GM12878 (cell line): ENCODE measurements at regions of chr1 and their contacts with region 1.

Region 1: GRCh38 chr1:87346122-87346814 is 17.6 kb downstream of the LMO4 start:
- DNase-seq: no peak
- ATAC-seq: no peak
- H3K4me3 ChIP-seq: no peak overlapping the region
- H3K27ac ChIP-seq: no peak overlapping the region
- H3K4me1 ChIP-seq: peaks cover 6% of the 10 kb centered on the region
- H3K27me3 ChIP-seq: no peaks in the 10 kb centered on the region
- CTCF ChIP-seq: no peak
- EP300 ChIP-seq: no peak
- POLR2A ChIP-seq: no peak
- RAD21 ChIP-seq: no peak

Region 2: DNA sequence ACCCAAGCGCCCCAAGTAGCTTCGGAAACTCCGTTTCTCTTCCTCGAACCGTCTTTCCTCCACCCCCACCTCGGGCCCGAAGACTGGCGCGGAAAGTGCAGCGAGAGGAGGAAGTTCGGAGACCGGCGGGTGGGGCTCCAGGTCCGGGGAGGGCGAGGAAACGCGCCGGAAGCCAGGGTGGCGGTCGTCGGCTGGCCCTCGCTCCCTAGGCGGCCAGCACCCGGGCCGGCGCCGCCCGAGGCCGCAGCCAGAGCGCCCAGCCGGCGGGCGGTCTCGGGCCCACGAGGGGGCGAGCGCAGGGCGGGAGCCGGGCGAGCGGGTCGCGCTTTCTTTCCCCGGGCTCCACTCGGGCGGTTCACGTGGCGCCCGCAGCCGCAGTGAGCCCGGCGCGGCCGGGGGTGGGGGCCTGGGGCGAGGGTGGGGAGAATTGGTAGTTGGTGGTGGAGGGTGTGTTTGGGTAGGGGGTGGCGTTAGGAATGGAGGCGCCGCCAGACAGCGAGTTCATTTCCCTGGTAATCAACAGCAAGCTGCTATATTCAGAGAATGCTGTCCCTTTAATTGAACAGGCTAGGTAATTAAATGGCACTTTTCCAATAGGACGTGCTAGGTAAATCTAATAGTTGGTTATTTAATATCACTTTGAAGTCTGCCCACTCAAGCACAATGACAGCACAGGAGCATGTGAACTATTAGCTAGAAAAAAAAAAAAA is 10.9 kb before region 1 on chr1:
- CTCF ChIA-PET with region 1: interaction called, 3 read pairs
- POLR2A ChIA-PET with region 1: interaction called, 6 read pairs
- RAD21 ChIA-PET with region 1: interaction called, 4 read pairs
- SMC1A ChIA-PET with region 1: interaction called, 12 read pairs
- in situ Hi-C with region 1: no loop called
- intact Hi-C with region 1: no loop called
- DNase-seq: no peak
- ATAC-seq: peak; percentile 65
- H3K4me3 ChIP-seq: peak overlapping the region; percentile 75
- H3K27ac ChIP-seq: peak overlapping the region; percentile 53
- H3K4me1 ChIP-seq: peaks cover 14% of the 10 kb centered on the region
- H3K27me3 ChIP-seq: no peaks in the 10 kb centered on the region
- CTCF ChIP-seq: peak; percentile 9 to 44 (median 33); a peak in 5 of 6 replicates
- EP300 ChIP-seq: no peak
- POLR2A ChIP-seq: peak; percentile 79
- RAD21 ChIP-seq: no peak; the same call in 1 of the 2 replicates